ENCODE measurements at regions of chr3 and their contacts with region 1.

Region 1: DNA sequence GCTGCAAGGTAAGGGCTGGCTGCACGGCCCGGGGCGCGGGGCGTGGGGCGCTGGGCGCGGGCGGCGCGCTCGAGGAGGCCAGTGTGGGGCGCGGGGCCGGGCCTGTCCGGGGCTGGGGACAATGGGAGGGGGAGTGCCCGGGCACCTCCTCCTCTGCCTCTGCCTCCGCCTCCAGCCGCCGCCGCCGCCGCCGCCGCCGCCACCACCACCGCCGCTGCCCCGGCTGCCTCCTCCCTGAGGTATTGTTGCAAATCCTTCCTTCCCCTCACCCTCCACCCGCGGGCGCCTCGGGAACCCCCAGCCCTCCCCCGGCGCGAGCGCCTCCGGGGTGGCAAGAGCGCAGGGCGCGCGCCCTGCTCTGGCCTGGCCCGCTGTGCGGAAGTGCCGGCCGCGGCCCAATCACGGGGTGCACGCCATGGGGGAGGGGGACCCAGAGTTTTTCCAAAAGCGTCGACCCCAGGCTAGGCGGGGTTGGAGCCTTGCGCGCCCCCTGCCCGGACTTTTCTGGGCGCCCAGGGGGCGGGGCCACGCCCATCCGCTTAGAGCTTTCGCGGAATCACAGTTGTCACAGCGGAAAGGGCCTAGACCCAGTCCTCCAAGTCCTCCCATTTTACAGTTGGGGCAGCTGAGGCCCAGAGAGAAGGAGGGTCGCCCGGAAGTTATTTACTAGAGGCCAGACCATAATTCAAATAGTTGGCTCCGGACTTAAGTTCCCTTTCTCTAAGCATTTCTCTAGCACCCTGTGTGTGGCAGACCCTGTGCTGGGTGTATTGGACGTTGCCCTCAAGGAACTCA is at the start of gene LPP:
- DNase-seq: peak; percentile 77
- ATAC-seq: peak; percentile 86
- H3K4me3 ChIP-seq: peak within 1 kb of the TSS; percentile 83
- H3K27ac ChIP-seq: peak within 1 kb of the TSS; percentile 97
- H3K4me1 ChIP-seq: peaks cover 30% of the 10 kb centered on the region
- H3K27me3 ChIP-seq: no peaks in the 10 kb centered on the region
- CTCF ChIP-seq: 0 out of 2 replicates have a peak, but pooled peaks have one; percentile 4
- POLR2A ChIP-seq: no peak; the same call in 1 of the 2 replicates
- RAD21 ChIP-seq: peak; percentile 24; the same call in 1 of the 2 replicates
- total RNA-seq, gene LPP: 111 and 130 TPM in 2 replicates

Region 2: DNA sequence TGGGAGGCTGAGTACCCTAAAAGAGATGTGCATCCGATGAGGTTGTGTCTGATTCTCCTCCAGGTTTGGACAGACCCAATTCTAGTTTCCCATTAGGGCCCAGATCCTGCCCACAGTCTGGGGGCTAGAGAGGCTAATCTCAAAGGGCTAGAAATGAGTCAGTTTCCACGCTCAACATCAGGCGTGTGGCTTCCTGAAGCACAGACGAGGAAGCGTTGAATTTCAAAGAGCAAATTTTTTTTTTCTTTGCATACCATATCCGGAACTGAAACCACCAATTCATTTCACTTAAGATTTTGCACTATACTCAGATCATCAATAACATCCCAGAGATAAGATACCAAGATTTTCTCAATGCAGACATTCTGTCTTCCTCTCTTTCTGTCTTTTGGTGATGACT is 235.2 kb before region 1 on chr3:
- CTCF ChIA-PET with region 1: no interaction called
- POLR2A ChIA-PET with region 1: no interaction called
- dilution Hi-C with region 1: no loop called
- in situ Hi-C with region 1: no loop called
- intact Hi-C with region 1: loop called (anchors 2 kb)
- DNase-seq: no peak
- ATAC-seq: no peak
- H3K4me3 ChIP-seq: no peak overlapping the region
- H3K27ac ChIP-seq: no peak overlapping the region
- H3K4me1 ChIP-seq: peaks cover 27% of the 10 kb centered on the region
- H3K27me3 ChIP-seq: no peaks in the 10 kb centered on the region
- CTCF ChIP-seq: no peak
- POLR2A ChIP-seq: no peak
- RAD21 ChIP-seq: no peak

Region 3: GRCh38 chr3:188067932-188068331 is 86.3 kb before region 1 on chr3:
- CTCF ChIA-PET with region 1: no interaction called
- POLR2A ChIA-PET with region 1: no interaction called
- dilution Hi-C with region 1: no loop called
- in situ Hi-C with region 1: no loop called
- intact Hi-C with region 1: no loop called
- DNase-seq: peak; percentile 83
- ATAC-seq: peak; percentile 87
- H3K4me3 ChIP-seq: no peak overlapping the region
- H3K27ac ChIP-seq: no peak overlapping the region
- H3K4me1 ChIP-seq: peaks cover 16% of the 10 kb centered on the region
- H3K27me3 ChIP-seq: no peaks in the 10 kb centered on the region
- CTCF ChIP-seq: no peak
- POLR2A ChIP-seq: no peak
- RAD21 ChIP-seq: 0 out of 2 replicates have a peak, but pooled peaks have one; percentile 13

Region 4: GRCh38 chr3:188230962-188231361 is 76.8 kb after region 1 on chr3:
- CTCF ChIA-PET with region 1: no interaction called
- POLR2A ChIA-PET with region 1: interaction called, 22 read pairs
- dilution Hi-C with region 1: no loop called
- in situ Hi-C with region 1: no loop called
- intact Hi-C with region 1: no loop called
- DNase-seq: peak; percentile 75
- ATAC-seq: peak; percentile 40; the same call in 1 of the 2 replicates
- H3K4me3 ChIP-seq: no peak overlapping the region
- H3K27ac ChIP-seq: no peak overlapping the region
- H3K4me1 ChIP-seq: peaks cover 19% of the 10 kb centered on the region
- H3K27me3 ChIP-seq: no peaks in the 10 kb centered on the region
- CTCF ChIP-seq: no peak
- POLR2A ChIP-seq: no peak
- RAD21 ChIP-seq: no peak

Region 5: DNA sequence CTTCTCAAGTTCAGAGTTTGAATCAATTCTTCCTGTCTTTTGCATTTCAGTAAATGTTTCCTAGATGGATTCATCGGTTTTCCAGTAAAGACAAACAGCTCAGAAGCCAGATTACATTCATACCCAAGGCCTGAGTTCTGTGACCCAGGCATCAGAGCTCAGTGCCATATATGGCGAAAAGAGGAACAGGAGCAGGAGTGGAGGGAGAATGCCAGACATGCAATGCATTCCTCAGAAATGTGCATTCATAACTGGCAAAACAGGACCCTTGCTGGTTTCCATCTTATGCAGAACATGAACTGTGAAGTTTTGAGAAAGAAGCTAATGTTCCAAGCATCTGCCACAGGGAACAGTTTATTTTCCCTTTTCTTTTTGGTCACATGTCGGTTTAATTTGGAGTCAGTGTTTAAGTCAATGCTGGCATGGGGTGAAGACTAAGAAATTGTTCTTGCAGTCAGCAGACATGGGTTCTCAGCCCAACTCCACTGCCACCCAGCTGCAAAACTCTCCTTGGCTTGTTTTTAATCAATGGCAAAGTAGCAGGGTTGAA is 116.3 kb after region 1 on chr3:
- CTCF ChIA-PET with region 1: no interaction called
- POLR2A ChIA-PET with region 1: interaction called, 11 read pairs
- dilution Hi-C with region 1: no loop called
- in situ Hi-C with region 1: no loop called
- intact Hi-C with region 1: loop called (anchors 1 kb)
- DNase-seq: peak; percentile 96
- ATAC-seq: peak; percentile 50
- H3K4me3 ChIP-seq: no peak overlapping the region
- H3K27ac ChIP-seq: peak overlapping the region; percentile 96
- H3K4me1 ChIP-seq: peaks cover 45% of the 10 kb centered on the region
- H3K27me3 ChIP-seq: no peaks in the 10 kb centered on the region
- CTCF ChIP-seq: no peak
- POLR2A ChIP-seq: no peak
- RAD21 ChIP-seq: peak; percentile 33; the same call in 1 of the 2 replicates

Region 6: DNA sequence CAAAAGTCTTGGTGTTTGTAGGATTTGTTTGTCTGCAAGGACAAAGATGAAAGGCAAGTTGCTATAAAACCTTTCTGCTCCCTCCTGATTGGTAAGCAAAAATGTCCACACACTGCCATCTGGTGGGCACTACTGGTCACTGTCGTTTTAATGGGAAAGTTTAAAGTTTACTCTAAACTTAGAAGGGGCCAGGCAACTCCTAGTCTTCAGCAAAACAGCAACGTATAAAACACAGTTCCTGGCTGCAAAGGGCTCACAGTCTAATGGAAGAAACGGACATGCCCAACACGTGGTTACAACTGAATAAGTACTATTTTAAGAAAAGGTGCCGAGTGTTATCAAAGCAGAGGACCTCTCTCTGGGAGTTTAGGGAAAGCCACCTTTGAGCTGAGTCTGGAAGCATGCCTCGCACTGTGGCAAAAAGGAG is 993.9 kb after region 1 on chr3:
- CTCF ChIA-PET with region 1: no interaction called
- POLR2A ChIA-PET with region 1: no interaction called
- dilution Hi-C with region 1: no loop called
- in situ Hi-C with region 1: no loop called
- intact Hi-C with region 1: loop called (anchors 10 kb)
- DNase-seq: peak; percentile 67
- ATAC-seq: peak; percentile 91
- H3K4me3 ChIP-seq: no peak overlapping the region
- H3K27ac ChIP-seq: no peak overlapping the region
- H3K4me1 ChIP-seq: 0 out of 2 replicates have a peak, but pooled peaks cover 3% of the 10 kb centered on the region
- H3K27me3 ChIP-seq: peaks cover 9% of the 10 kb centered on the region
- CTCF ChIP-seq: peak; percentile 81
- POLR2A ChIP-seq: no peak
- RAD21 ChIP-seq: peak; percentile 79

Measured in IMR-90 (cell line).